IMR-90 (cell line): ENCODE measurements at regions of chr17 and their contacts with region 1.

Region 1: DNA sequence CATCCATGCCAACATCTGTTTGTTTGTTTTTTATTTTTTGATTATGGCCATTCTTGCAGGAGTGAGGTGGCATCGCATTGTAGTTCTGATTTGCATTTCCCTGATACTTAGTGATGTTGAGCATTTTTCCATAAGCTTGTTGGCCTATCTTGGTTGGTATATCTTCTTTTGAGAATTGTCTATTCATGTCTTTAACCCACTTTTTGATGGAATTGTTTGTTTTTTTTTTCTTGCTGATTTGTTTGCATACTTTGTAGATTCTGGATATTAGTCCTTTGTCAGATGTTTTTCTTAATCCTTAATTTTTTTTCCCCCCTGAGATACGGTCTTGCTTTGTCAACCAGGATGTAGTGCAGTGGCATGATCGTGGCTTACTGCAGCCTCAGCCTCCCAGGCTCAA is 43.0 kb downstream of the RNF135 start:
- DNase-seq: no peak
- ATAC-seq: no peak
- H3K4me3 ChIP-seq: no peak overlapping the region
- H3K27ac ChIP-seq: no peak overlapping the region
- H3K4me1 ChIP-seq: no peaks in the 10 kb centered on the region; the same call in 1 of the 2 replicates
- H3K27me3 ChIP-seq: no peaks in the 10 kb centered on the region
- CTCF ChIP-seq: no peak
- POLR2A ChIP-seq: no peak
- RAD21 ChIP-seq: no peak

Region 2: DNA sequence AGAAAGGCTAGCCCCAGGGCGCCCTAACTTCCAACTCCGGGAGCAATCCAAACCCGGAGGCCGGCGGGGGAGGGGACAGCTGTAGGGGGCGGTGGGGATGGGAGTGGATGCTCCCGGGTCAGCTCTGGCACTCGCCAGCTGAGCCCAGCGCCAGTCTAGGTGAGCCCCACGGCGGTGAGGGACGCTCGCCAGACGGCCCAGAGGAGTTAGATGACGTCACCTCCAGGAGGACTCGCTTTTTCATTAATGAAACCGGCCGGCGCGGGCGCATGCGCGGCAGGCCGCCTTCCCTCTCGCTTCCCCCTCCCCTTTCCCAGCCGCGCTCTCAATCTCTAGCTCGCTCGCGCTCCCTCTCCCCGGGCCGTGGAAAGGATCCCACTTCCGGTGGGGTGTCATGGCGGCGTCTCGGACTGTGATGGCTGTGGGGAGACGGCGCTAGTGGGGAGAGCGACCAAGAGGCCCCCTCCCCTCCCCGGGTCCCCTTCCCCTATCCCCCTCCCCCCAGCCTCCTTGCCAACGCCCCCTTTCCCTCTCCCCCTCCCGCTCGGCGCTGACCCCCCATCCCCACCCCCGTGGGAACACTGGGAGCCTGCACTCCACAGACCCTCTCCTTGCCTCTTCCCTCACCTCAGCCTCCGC is 80.9 kb after region 1 on chr17 and contains the start of gene NF1:
- CTCF ChIA-PET with region 1: no interaction called
- POLR2A ChIA-PET with region 1: no interaction called
- dilution Hi-C with region 1: no loop called
- in situ Hi-C with region 1: no loop called
- intact Hi-C with region 1: loop called (anchors 5 kb)
- DNase-seq: peak; percentile 94
- ATAC-seq: peak; percentile 92
- H3K4me3 ChIP-seq: peak within 1 kb of the TSS; percentile 54
- H3K27ac ChIP-seq: peak within 1 kb of the TSS; percentile 95
- H3K4me1 ChIP-seq: no peaks in the 10 kb centered on the region; the same call in 1 of the 2 replicates
- H3K27me3 ChIP-seq: no peaks in the 10 kb centered on the region
- CTCF ChIP-seq: no peak
- POLR2A ChIP-seq: peak; percentile 79
- RAD21 ChIP-seq: peak; percentile 16; the same call in 1 of the 2 replicates
- total RNA-seq, gene NF1: 48.3 and 48.6 TPM in 2 replicates